Activated B cell treated with CpG ODN at 0.5 μM for 24 hours (primary cell): ENCODE measurements at regions of chr16 and their contacts with region 1.

Region 1: DNA sequence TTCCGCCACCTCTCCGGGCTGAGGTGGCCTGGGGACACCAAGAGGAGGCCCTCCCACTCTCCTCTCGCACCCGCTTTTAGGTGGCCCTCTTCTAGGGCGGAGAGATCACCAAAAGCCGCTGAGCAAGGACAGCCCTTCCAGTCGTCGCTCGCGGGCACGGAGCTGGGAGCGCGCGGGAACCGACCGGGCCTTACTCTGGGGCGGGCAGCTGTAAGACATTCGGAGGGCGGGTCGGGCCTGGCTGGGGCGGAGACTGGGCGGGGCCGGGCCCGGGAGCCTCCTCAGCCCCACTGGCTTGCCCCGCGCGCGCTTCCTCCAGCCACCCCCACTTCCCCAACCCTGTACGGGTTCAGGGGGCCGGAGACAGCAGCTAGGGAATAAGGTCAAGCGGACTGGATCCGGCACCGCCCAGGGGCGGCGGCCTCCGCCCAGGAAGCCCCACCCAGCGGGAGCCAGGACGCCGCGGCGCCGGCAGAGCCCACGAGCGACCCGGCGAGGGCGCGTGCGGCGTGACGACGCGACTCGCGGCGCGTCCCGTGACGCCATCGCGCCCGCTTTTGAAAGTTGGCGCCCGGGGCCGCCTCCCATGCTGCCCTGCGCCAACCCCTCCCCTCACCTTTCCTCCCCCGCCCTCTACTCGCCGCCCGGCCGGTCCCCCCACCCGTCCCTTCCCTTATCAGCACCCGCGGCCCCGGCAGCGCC is 351 bp upstream of the CTCF start:
- DNase-seq: peak; percentile 97
- ATAC-seq: peak; percentile 77
- H3K4me3 Mint-ChIP-seq: peak overlapping the region; percentile 91
- H3K27ac Mint-ChIP-seq: peak overlapping the region; percentile 91
- H3K4me1 Mint-ChIP-seq: peaks cover 61% of the 10 kb centered on the region
- H3K27me3 Mint-ChIP-seq: no peaks in the 10 kb centered on the region
- CTCF ChIP-seq: no peak

Region 2: DNA sequence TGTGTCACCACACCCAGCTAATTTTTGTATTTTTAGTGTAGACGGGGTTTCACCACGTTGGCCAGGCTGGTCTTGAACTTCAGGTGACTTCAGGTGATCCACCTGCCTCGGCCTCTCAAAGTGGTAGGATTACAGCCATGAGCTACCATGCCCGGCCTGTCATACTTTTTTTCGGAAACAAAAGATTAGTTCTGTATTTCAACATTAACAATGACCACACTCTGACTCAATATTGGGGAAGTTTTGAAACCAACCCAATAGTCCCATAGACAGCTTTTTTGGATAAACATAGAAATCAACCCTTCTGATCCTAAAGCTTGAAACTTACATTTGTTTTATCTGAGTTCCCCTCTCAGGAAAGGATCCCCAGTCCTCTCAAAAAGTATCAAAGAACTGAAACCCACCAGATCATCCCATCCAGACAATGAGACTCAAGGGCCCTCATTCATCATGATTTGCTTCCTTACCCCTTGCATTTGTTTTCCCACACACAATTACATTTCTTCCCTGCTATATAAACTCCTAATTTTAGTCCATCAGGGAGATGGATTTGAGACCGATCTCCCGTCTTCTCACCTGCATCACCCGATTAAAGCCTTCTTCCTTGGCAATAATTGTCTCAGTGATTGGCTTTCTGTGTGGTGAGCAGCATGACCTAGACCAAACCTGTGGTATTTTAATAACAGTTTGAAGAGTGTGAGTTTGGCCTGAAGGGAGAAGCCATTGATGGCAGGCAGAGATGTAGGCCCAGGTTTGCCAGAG is 71.5 kb before region 1 on chr16:
- CTCF ChIA-PET with region 1: interaction called, 7 read pairs
- POLR2A ChIA-PET with region 1: interaction called, 20 read pairs
- intact Hi-C with region 1: loop called (anchors 1 kb)
- DNase-seq: no peak
- ATAC-seq: no peak
- H3K4me3 Mint-ChIP-seq: peak overlapping the region; percentile 61
- H3K27ac Mint-ChIP-seq: peak overlapping the region; percentile 89
- H3K4me1 Mint-ChIP-seq: peaks cover 77% of the 10 kb centered on the region
- H3K27me3 Mint-ChIP-seq: no peaks in the 10 kb centered on the region
- CTCF ChIP-seq: no peak

Region 3: GRCh38 chr16:67537270-67537635 is 24.7 kb before region 1 on chr16:
- CTCF ChIA-PET with region 1: interaction called, 8 read pairs
- POLR2A ChIA-PET with region 1: interaction called, 54 read pairs
- intact Hi-C with region 1: loop called (anchors 1 kb)
- DNase-seq: no peak
- ATAC-seq: peak; percentile 47
- H3K4me3 Mint-ChIP-seq: peak overlapping the region; percentile 90
- H3K27ac Mint-ChIP-seq: peak overlapping the region; percentile 93
- H3K4me1 Mint-ChIP-seq: peaks cover 82% of the 10 kb centered on the region
- H3K27me3 Mint-ChIP-seq: no peaks in the 10 kb centered on the region
- CTCF ChIP-seq: no peak

Region 4: DNA sequence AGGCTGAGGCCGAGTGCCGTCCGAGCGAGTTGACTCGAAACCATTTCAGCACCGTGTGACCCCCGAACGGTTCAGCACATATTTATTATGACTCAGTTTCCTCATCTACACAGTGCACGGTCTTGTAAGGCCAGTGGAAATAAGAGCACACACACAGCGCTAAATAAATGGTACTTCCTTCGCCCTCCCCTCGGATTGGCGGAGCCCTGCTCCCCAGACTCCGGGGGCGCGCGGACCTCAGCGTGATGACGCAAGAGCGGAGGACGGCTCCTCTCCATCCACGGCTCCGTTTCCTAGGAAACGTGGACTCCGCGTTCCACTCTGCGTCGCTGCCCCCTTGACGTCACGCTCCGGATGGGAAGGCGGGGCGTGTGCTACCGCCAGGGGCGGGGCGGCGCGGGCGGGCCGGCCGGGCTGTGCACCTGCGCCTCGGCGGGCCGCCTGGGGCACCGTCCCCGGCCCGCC is 98.6 kb after region 1 on chr16 and contains the start of gene PARD6A:
- CTCF ChIA-PET with region 1: no interaction called
- POLR2A ChIA-PET with region 1: interaction called, 29 read pairs
- intact Hi-C with region 1: loop called (anchors 1 kb)
- DNase-seq: peak; percentile 87
- ATAC-seq: peak; percentile 80
- H3K4me3 Mint-ChIP-seq: peak within 1 kb of the TSS; percentile 94
- H3K27ac Mint-ChIP-seq: peak within 1 kb of the TSS; percentile 94
- H3K4me1 Mint-ChIP-seq: peaks cover 28% of the 10 kb centered on the region
- H3K27me3 Mint-ChIP-seq: no peaks in the 10 kb centered on the region
- CTCF ChIP-seq: no peak
- total RNA-seq, gene PARD6A: 5.9 and 6.0 TPM in 2 replicates

Region 5: DNA sequence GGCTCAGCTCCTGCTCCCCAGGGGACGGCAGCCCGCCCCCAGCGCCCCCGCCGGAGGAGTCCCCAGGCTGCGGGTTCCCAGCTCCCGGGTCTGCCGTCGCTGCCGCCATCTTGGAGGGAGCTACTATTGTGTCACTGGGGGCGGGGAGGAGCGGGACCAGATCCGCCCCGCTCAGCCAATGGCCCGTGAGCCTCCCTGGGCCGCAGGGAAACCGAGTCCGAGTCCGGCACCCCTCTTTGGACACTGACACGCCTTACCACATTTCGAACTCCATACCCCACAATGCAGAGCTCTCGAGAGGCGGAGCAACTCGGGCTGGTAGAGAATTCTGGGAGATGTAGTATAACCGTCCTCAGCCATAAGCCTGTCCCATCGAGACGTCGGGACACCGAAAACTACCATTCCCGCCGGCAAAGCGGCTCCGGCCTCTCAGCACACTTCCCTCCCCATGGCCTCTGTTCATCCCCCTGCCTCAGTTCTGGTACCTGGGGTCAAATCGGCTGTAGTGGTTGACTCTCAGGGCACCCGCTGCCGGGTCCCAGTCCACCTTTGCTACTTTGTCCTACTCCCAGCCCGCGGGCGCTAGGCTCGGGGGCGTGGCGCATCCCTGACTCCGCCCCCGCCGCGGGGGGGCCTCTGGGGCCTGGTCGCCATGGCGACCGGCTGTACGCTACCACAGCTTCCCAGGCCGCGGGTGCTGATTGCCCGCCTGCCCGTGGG is 244.6 kb after region 1 on chr16 and contains the starts of genes RANBP10 and TSNAXIP1:
- CTCF ChIA-PET with region 1: no interaction called
- POLR2A ChIA-PET with region 1: interaction called, 4 read pairs
- intact Hi-C with region 1: loop called (anchors 2 kb)
- DNase-seq: peak; percentile 93
- ATAC-seq: peak; percentile 89
- H3K4me3 Mint-ChIP-seq: peak within 1 kb of the TSS; percentile 96
- H3K27ac Mint-ChIP-seq: peak within 1 kb of the TSS; percentile 96
- H3K4me1 Mint-ChIP-seq: peaks cover 49% of the 10 kb centered on the region
- H3K27me3 Mint-ChIP-seq: no peaks in the 10 kb centered on the region
- CTCF ChIP-seq: no peak
- total RNA-seq, gene RANBP10: 25.2 and 30.6 TPM in 2 replicates
- total RNA-seq, gene TSNAXIP1: 1.2 and 1.9 TPM in 2 replicates